Mammary epithelial cell (primary cell): ENCODE measurements at regions of chr20 and their contacts with region 1.

Region 1: GRCh38 chr20:57089691-57090150 is 176.7 kb downstream of the BMP7 start:
- DNase-seq: peak; percentile 33
- H3K4me3 ChIP-seq: no peak overlapping the region
- H3K27ac ChIP-seq: no peak overlapping the region
- H3K4me1 ChIP-seq: no peaks in the 10 kb centered on the region
- H3K27me3 ChIP-seq: no peaks in the 10 kb centered on the region
- CTCF ChIP-seq: peak; percentile 75 to 98

Region 2: DNA sequence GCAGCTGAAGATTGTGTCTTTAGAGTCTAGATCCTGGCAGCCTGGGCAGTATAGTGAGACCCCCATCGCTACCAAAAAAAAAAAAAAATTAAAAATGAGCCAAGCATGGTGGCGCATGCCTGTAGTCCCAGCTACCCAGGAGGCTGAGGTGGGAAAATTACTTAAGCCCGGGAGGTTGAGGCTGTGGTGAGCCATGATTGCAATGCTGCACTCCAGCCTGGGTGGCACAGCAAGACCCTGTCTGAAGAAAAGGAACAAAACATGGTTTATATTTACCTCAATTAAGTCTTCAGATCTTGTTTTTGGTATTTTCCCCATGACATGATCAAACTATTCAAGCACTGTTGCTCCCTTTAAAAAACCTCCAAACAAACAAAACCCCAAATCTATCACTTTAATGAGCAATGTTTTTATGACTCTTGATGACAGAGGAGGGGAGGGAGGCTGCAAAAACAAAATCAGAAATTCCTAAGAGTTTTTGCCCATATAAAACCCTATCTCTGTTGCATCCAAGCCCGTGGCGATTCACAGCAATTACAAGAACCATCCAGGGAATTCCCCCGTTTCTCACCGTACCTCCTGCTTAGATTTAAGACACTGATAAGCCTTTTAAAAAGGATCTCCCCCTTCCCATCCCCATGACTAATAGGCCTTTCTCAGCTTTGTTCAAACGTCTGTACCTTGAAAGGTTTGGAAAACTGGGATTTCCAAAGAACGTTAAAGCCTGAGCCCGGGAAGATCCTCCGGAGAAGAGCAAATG is 83.1 kb before region 1 on chr20:
- CTCF ChIA-PET with region 1: no interaction called
- dilution Hi-C with region 1: no loop called
- in situ Hi-C with region 1: no loop called
- intact Hi-C with region 1: no loop called
- DNase-seq: peak; percentile 64
- H3K4me3 ChIP-seq: no peak overlapping the region
- H3K27ac ChIP-seq: no peak overlapping the region
- H3K4me1 ChIP-seq: peaks cover 4% of the 10 kb centered on the region
- H3K27me3 ChIP-seq: no peaks in the 10 kb centered on the region
- CTCF ChIP-seq: no peak

Region 3: DNA sequence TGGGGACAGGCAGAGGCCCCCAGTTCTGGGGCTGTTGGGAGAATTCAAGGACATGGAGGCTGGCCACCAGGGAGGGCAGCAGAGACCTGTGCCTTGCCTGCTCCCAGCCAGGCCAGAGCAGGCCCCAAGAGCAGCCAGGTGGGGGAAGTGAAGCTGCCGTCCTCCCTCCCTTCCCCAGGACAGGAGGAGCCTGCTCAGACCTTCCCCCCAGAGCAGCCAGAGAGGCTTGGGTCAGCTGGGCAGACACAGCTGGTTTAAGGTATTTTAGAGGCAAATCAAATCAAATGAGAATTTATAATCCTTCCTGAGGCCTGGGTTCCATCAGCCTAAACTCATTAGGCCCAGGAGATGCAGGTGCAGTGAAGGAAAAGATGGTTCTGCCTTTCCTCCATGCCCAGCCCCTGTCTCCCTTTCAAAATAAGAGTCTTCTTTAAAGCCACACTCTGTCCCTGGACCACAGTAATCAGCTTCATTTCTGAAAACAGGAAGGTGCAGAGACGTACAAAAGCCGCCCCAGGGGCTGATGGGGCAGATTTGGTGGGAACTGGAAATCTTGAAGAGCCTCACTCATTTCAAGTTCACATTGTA is 155.0 kb after region 1 on chr20:
- CTCF ChIA-PET with region 1: no interaction called
- dilution Hi-C with region 1: no loop called
- in situ Hi-C with region 1: no loop called
- intact Hi-C with region 1: loop called (anchors 10 kb)
- DNase-seq: no peak
- H3K4me3 ChIP-seq: no peak overlapping the region
- H3K27ac ChIP-seq: no peak overlapping the region
- H3K4me1 ChIP-seq: peaks cover 6% of the 10 kb centered on the region
- H3K27me3 ChIP-seq: peaks cover 2% of the 10 kb centered on the region
- CTCF ChIP-seq: peak in 1 of 2 donors; percentile 10

Region 4: DNA sequence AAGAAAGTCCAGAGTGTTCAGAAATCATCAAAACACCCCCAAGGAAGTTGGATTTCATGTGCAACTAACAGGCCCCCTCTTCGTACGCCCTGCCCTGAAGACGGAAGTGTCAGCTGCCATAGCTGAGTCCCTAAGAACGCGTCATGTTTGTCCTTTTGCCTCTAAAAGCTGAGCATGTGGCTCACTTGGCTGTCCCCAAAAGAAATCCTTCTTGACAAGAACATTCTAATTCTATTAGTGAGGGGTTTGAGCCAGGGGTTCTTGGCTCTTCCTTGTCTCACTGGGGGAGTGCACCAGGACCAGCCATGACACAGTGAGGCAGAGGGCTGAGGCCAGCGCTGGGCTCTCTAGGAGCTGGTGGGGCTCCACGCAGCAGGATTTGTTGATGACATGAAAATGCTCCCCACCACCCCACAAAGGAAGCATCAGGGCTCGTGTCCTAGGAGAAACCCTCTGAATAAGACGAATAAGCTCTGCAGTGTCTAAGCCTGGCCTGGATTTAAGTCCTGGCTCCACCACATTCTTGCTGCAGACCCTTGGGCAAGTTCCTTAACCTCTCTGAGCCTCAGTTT is 219.9 kb after region 1 on chr20:
- CTCF ChIA-PET with region 1: no interaction called
- dilution Hi-C with region 1: no loop called
- in situ Hi-C with region 1: no loop called
- intact Hi-C with region 1: no loop called
- DNase-seq: no peak
- H3K4me3 ChIP-seq: no peak overlapping the region
- H3K27ac ChIP-seq: no peak overlapping the region
- H3K4me1 ChIP-seq: peaks cover under 1% of the 10 kb centered on the region
- H3K27me3 ChIP-seq: no peaks in the 10 kb centered on the region
- CTCF ChIP-seq: no peak

Region 5: DNA sequence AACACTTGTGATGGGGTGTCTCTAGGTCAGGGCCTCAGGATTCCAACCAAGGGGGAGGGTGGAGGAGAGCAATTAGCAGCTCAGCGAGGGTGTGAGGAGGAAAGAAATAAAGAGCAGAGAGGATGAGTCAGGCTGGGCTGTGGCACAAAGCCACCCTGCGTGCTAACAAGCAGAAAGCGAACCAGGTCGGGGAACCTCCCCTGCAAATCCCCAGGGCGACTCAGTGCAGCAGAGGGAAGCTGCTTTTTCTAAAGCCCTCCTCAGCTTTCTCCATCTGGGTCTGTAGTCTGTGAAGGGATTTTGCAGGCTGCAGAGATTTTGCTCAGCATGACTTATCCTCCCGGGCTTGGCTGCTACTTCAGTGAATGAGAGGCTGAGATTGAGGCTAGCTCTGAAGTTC is 233.3 kb after region 1 on chr20:
- CTCF ChIA-PET with region 1: no interaction called
- dilution Hi-C with region 1: loop called (anchors 10 kb)
- in situ Hi-C with region 1: no loop called
- intact Hi-C with region 1: no loop called
- DNase-seq: peak; percentile 70
- H3K4me3 ChIP-seq: no peak overlapping the region
- H3K27ac ChIP-seq: no peak overlapping the region
- H3K4me1 ChIP-seq: peaks cover 20% of the 10 kb centered on the region
- H3K27me3 ChIP-seq: peaks cover 2% of the 10 kb centered on the region
- CTCF ChIP-seq: no peak

Region 6: GRCh38 chr20:57329608-57330221 is 240.0 kb after region 1 on chr20 and contains the start of gene SPO11:
- CTCF ChIA-PET with region 1: interaction called, 9 read pairs
- dilution Hi-C with region 1: loop called (anchors 10 kb)
- in situ Hi-C with region 1: loop called in 1 of 2 experiments (anchors 5 kb)
- intact Hi-C with region 1: loop called (anchors 1 kb)
- DNase-seq: no peak
- H3K4me3 ChIP-seq: no peak within 1 kb of the TSS
- H3K27ac ChIP-seq: no peak within 1 kb of the TSS
- H3K4me1 ChIP-seq: peaks cover 15% of the 10 kb centered on the region
- H3K27me3 ChIP-seq: no peaks in the 10 kb centered on the region
- CTCF ChIP-seq: peak in 1 of 2 donors; percentile 37
- total RNA-seq, gene SPO11: not detected

Region 7: DNA sequence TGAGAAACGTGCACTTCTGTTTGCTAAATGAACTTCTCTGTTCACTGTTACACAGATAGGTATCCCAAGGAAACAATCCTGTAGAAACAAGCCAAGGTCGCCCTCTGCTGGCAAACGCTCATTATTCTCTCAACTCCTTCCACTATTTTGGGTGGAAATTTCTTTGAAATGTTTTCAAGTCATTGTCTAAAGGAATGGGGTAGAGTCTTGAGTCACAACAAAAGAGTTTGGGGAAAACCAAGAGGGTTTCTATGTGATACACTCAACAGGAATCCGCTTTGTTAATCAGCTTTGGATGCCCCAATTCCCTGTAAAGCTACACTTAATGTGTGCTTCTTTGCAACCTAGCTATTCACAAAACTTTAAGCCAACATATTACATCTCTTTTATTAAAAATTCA is 256.8 kb after region 1 on chr20:
- CTCF ChIA-PET with region 1: interaction called, 3 read pairs
- dilution Hi-C with region 1: no loop called
- in situ Hi-C with region 1: loop called in 1 of 2 experiments (anchors 5 kb)
- intact Hi-C with region 1: loop called (anchors 1 kb)
- DNase-seq: peak; percentile 75
- H3K4me3 ChIP-seq: no peak overlapping the region
- H3K27ac ChIP-seq: no peak overlapping the region
- H3K4me1 ChIP-seq: peaks cover 4% of the 10 kb centered on the region
- H3K27me3 ChIP-seq: no peaks in the 10 kb centered on the region
- CTCF ChIP-seq: peak; percentile 75 to 76

Region 8: GRCh38 chr20:57498425-57499400 is 409.0 kb after region 1 on chr20:
- CTCF ChIA-PET with region 1: no interaction called
- dilution Hi-C with region 1: no loop called
- in situ Hi-C with region 1: loop called in 1 of 2 experiments (anchors 25 kb)
- intact Hi-C with region 1: loop called (anchors 1 kb)
- DNase-seq: no peak
- H3K4me3 ChIP-seq: no peak overlapping the region
- H3K27ac ChIP-seq: no peak overlapping the region
- H3K4me1 ChIP-seq: peaks cover 3% of the 10 kb centered on the region
- H3K27me3 ChIP-seq: no peaks in the 10 kb centered on the region
- CTCF ChIP-seq: peak; percentile 15 to 43